ENCODE measurements at regions of chr3 and their contacts with region 1.

Region 1: DNA sequence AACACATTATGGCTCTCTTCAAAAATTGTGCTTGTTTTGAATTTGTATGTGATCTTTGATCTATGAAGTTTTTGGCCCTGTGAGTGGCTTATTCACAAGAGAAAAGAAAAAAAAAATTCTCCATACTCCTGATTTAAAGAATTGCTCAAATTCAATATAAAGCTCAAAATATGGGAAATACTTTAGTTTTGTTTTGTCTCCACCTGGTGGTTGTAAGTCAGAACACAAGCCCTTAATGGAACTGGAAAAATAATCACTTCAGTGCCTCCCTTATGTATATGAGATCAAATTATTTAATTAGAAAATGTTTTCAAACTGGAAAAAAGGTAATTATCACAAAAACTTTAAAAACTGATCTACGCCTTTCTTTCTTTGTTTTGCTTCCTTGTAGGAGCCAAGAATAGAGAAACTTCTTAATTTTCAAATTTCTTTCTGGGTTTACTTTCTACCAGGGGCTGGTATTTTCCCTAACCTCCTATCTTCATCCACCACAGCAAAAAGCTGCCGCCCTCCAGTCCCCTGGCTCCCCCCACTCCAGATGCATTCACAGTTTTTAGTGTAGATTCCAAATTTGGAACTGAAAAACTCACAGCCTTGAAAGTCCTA is 50.6 kb downstream of the SERP1 start:
- DNase-seq: no peak
- ATAC-seq: peak; percentile 39
- H3K4me3 Mint-ChIP-seq: no peak overlapping the region
- H3K27ac Mint-ChIP-seq: no peak overlapping the region
- H3K4me1 Mint-ChIP-seq: peaks cover 11% of the 10 kb centered on the region
- H3K27me3 Mint-ChIP-seq: no peaks in the 10 kb centered on the region
- CTCF ChIP-seq: peak; percentile 61

Region 2: DNA sequence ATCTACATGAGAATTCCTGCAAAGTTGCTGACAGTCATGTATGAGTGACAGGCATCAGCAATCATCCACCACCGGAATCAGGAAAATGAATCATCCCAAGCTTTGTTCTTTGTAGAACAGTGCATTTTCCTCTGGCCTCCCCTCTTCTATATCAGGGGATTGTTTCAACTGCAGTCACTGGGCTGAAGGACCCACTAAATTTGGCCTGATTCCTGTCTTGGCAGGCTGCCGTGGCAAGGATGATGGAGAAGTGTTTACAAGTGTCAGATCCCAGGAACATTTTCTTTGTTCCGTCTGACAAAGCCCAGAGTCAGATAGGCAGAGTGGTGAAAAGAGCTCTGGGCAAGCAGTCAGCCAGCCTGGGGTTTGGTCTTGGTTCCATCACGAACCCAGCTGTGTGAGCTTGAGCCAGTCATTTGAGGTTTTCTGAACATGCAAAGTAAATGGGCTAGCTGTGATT is 262.6 kb before region 1 on chr3:
- CTCF ChIA-PET with region 1: interaction called, 68 read pairs
- POLR2A ChIA-PET with region 1: no interaction called
- DNase-seq: no peak
- ATAC-seq: no peak; the same call in 1 of the 2 replicates
- H3K4me3 Mint-ChIP-seq: no peak overlapping the region
- H3K27ac Mint-ChIP-seq: no peak overlapping the region
- H3K4me1 Mint-ChIP-seq: peaks cover 5% of the 10 kb centered on the region; the same call in 1 of the 2 replicates
- H3K27me3 Mint-ChIP-seq: no peaks in the 10 kb centered on the region
- CTCF ChIP-seq: no peak

Region 3: GRCh38 chr3:150251187-150252062 is 244.2 kb before region 1 on chr3:
- CTCF ChIA-PET with region 1: interaction called, 15 read pairs
- POLR2A ChIA-PET with region 1: no interaction called
- DNase-seq: no peak
- ATAC-seq: peak; percentile 75
- H3K4me3 Mint-ChIP-seq: no peak overlapping the region
- H3K27ac Mint-ChIP-seq: no peak overlapping the region
- H3K4me1 Mint-ChIP-seq: peaks cover 31% of the 10 kb centered on the region
- H3K27me3 Mint-ChIP-seq: no peaks in the 10 kb centered on the region
- CTCF ChIP-seq: no peak

Region 4: GRCh38 chr3:150296123-150296735 is 199.4 kb before region 1 on chr3:
- CTCF ChIA-PET with region 1: interaction called, 24 read pairs
- POLR2A ChIA-PET with region 1: no interaction called
- DNase-seq: no peak
- ATAC-seq: no peak
- H3K4me3 Mint-ChIP-seq: no peak overlapping the region
- H3K27ac Mint-ChIP-seq: peak overlapping the region; percentile 6; the same call in 1 of the 2 replicates
- H3K4me1 Mint-ChIP-seq: peaks cover 42% of the 10 kb centered on the region
- H3K27me3 Mint-ChIP-seq: no peaks in the 10 kb centered on the region
- CTCF ChIP-seq: no peak

Region 5: DNA sequence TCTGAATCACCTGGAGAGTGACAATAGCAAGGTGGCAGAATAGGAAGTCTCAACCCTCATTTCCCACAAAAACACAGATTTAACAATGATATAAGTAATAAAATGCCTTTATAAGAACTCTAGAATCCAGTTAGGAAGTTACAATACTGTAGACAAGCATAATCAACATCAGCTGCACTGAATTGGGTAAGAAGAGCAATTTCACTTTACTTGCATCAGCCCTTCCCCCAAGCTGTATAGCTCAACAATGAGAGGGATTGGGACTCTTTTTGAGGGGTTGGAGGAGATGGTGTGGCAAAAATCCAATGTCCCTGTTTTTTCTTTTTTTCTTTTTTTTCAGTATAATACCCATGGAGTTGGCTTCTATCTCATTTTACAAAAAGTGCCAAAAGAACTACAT is 12.4 kb before region 1 on chr3:
- CTCF ChIA-PET with region 1: interaction called, 13 read pairs
- POLR2A ChIA-PET with region 1: no interaction called
- DNase-seq: no peak
- ATAC-seq: no peak
- H3K4me3 Mint-ChIP-seq: no peak overlapping the region
- H3K27ac Mint-ChIP-seq: no peak overlapping the region
- H3K4me1 Mint-ChIP-seq: no peaks in the 10 kb centered on the region; the same call in 1 of the 2 replicates
- H3K27me3 Mint-ChIP-seq: no peaks in the 10 kb centered on the region
- CTCF ChIP-seq: no peak

Measured in WTC11 (cell line).